Heart left ventricle (tissue), 16 donors: ENCODE measurements at regions of chr14 and their contacts with region 1.

Region 1: GRCh38 chr14:35140718-35141581 is 18.6 kb downstream of the PRORP start:
- DNase-seq: no peak
- ATAC-seq: no peak
- H3K4me3 ChIP-seq: no peak overlapping the region
- H3K27ac ChIP-seq: no peak overlapping the region
- H3K4me1 ChIP-seq: no peaks in the 10 kb centered on the region
- H3K27me3 ChIP-seq: no peaks in the 10 kb centered on the region
- CTCF ChIP-seq: peak in 11 of 12 donors; percentile 14 to 67 (median 45)
- POLR2A ChIP-seq: no peak

Region 2: GRCh38 chr14:35215110-35215876 is 74.3 kb after region 1 on chr14:
- intact Hi-C with region 1: loop called in 3 of 10 experiments (anchors 5 to 10 kb)
- DNase-seq: no peak
- ATAC-seq: peak in 3 of 4 donors; percentile 52 to 64 (median 59)
- H3K4me3 ChIP-seq: no peak overlapping the region
- H3K27ac ChIP-seq: peak overlapping the region in 1 of 12 donors; percentile 14
- H3K4me1 ChIP-seq: peaks cover 0 to 8% (median 0%) of the 10 kb centered on the region in 12 donors
- H3K27me3 ChIP-seq: no peaks in the 10 kb centered on the region
- CTCF ChIP-seq: peak; percentile 28 to 70 (median 60)
- POLR2A ChIP-seq: no peak

Region 3: DNA sequence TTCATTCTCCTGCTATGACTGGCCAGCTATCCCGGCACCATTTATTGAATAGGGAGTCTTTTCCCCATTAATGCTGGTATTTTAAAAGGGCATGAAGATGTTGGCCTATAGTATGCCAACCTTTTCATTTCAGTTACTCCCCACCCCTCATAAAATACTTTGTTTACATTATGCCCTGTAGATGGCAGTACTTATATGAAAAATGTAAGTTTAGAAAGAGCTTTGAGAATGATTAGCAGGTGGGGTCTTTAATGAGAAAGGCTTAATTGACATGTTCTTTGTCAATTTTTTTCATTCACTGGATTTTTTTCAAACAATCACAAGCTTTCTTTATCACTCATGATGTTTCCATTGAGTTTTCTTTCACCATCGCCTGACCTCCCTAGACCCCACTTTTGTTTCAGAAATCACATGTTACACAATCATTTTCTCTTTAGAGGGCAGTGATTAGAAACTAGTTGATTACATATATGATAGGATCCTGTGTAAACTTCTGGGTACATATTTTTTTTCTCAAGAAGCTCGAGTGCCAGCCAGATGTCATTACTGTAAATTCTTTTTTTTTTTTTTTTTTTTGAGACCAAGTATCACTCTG is 88.6 kb after region 1 on chr14:
- intact Hi-C with region 1: loop called in 1 of 10 experiments (anchors 10 kb)
- DNase-seq: no peak
- ATAC-seq: no peak
- H3K4me3 ChIP-seq: no peak overlapping the region
- H3K27ac ChIP-seq: no peak overlapping the region
- H3K4me1 ChIP-seq: peaks cover 0 to 33% (median 0%) of the 10 kb centered on the region in 12 donors
- H3K27me3 ChIP-seq: no peaks in the 10 kb centered on the region
- CTCF ChIP-seq: peak in 11 of 12 donors; percentile 9 to 49 (median 30)
- POLR2A ChIP-seq: no peak

Region 4: GRCh38 chr14:35423621-35424020 is 282.7 kb after region 1 on chr14:
- intact Hi-C with region 1: loop called in 5 of 10 experiments (anchors 2 to 5 kb)
- DNase-seq: no peak
- ATAC-seq: no peak
- H3K4me3 ChIP-seq: no peak overlapping the region
- H3K27ac ChIP-seq: no peak overlapping the region
- H3K4me1 ChIP-seq: peaks cover 0 to 11% (median 0%) of the 10 kb centered on the region in 12 donors
- H3K27me3 ChIP-seq: no peaks in the 10 kb centered on the region
- CTCF ChIP-seq: no peak
- POLR2A ChIP-seq: no peak

Region 5: GRCh38 chr14:35687335-35687939 is 546.5 kb after region 1 on chr14:
- intact Hi-C with region 1: loop called in 1 of 10 experiments (anchors 10 kb)
- DNase-seq: no peak
- ATAC-seq: peak in 2 of 4 donors; percentile 62 to 63
- H3K4me3 ChIP-seq: no peak overlapping the region
- H3K27ac ChIP-seq: no peak overlapping the region
- H3K4me1 ChIP-seq: no peaks in the 10 kb centered on the region
- H3K27me3 ChIP-seq: no peaks in the 10 kb centered on the region
- CTCF ChIP-seq: peak; percentile 52 to 82 (median 69)
- POLR2A ChIP-seq: no peak